WTC11 (cell line): ENCODE measurements at regions of chr1 and their contacts with region 1.

Region 1: DNA sequence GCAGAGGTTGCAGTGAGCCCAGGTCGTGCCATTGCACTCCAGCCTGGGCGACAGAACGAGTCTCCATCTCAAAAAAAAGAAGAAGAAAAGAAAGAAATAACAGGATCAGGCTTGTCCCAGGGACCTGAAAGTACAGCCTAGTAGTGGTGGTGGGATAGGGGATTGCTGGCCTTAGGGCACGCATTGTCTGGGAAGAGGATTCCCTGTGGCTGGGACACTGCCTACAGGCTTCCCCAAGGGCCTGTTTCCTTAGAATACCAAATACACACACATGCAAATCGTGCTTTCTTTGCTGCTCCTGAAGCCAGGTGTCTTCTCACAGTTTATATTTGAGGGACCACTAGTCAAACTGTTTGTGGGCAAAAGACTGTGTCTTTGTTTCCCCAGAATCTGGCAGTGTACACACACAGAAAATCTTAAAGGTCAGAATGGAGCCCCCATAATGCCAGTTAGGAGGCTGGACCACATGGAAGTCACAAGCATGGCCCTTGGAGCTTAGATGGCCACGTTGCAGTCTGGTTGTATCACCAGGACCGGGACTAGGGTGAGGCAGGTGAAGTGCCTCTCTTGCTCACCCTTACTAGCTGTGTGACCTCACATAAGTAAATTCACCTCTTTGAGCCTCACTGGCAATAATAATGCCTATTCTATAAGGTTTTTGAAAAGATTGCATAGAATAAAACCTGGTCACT is 12.7 kb upstream of the ASAP3 start:
- DNase-seq: no peak
- ATAC-seq: peak; percentile 51
- H3K4me3 Mint-ChIP-seq: no peak overlapping the region
- H3K27ac Mint-ChIP-seq: no peak overlapping the region
- H3K4me1 Mint-ChIP-seq: peaks cover 12% of the 10 kb centered on the region
- H3K27me3 Mint-ChIP-seq: peaks cover 4% of the 10 kb centered on the region
- CTCF ChIP-seq: no peak

Region 2: DNA sequence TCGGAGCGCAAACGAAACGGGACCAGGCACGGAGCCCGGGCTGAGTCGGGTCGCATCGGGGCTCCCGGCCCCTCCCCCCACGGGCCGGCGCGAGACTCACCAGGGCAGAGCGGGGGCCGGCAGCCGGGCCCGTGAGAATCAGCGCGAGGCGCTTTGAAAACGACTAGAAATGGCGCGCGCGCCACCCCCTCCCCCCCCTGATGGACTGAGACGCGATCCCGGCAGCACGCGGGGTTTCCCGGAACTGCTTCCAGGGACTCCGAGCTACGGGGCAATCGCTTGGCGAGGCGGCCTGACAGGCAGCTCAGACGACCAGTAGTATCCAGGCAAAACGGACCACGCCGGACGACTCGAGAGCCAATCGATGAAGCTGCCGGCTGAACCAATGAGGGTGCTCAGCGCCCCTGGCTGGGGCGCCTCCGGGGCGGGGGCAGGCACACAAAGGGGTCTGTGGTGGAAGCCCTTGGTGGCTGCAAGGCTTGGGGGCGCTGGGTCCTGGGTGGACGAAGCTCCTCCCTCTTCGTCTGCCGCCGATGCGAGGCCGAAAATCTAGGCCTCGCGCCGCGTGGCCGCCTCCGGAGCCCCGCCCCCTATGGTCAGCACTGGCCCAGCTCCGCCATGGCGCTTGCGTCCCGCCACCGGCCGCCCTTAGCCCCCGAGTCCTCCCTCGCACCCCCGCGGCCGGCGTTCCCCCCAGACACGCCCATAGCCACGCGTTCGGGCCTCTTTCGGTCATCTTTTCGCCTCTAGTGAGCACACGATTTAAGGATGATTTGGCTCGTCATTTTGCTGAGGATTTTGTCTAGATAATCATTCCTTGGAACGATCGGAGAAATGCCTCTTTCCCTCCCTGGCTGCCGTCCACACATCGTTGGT is 152.3 kb before region 1 on chr1 and contains the start of gene HNRNPR:
- CTCF ChIA-PET with region 1: interaction called, 11 read pairs
- POLR2A ChIA-PET with region 1: interaction called, 7 read pairs
- DNase-seq: peak; percentile 100
- ATAC-seq: peak; percentile 99
- H3K4me3 Mint-ChIP-seq: peak within 1 kb of the TSS; percentile 88
- H3K27ac Mint-ChIP-seq: peak within 1 kb of the TSS; percentile 99
- H3K4me1 Mint-ChIP-seq: peaks cover 43% of the 10 kb centered on the region
- H3K27me3 Mint-ChIP-seq: peaks cover 47% of the 10 kb centered on the region
- CTCF ChIP-seq: no peak
- total RNA-seq, gene HNRNPR: 157 to 178 TPM (median 170 TPM) in 3 replicates

Region 3: DNA sequence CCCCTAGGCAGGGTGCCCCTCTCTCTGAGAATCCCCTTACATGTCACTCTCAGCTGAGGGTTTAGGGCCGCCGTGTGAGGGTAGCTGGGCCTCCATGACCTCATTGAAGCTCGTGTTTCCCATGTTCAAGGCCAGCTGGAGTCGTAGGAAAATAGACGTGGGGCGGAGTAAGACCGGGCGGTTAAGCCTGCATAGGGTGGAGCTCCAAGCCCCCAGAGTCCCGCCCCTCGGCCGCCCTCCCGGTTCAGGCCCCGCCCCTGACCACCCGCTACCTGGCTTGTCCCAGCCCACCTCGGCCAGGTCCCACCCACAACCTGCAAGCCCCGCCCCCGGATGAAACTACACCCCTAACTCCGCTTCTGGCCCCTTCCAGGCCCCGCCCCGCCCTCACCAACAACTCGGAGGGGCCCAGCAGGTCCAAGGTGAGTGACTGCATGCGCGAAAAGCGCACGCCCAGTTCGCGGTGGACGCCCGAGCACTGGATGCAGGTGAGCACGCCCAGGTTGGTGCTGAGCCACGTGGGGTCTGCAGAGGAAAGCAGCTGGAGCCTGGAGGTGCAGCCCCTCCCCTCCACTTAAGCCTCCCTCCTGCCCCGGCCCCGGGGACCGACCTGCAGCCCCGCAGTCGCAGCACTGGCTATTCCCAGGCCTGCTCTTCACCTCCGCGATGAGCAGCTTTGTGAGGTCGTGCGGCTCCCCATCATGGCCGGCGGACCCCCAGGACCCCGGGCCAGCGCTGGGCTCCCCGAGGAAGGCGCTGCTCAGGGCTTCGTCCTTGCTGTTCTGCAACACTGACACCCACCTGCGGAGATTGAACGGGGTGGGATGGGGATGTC is 59.9 kb before region 1 on chr1:
- CTCF ChIA-PET with region 1: interaction called, 28 read pairs
- POLR2A ChIA-PET with region 1: no interaction called
- DNase-seq: peak; percentile 99
- ATAC-seq: peak; percentile 96
- H3K4me3 Mint-ChIP-seq: peak overlapping the region; percentile 45
- H3K27ac Mint-ChIP-seq: no peak overlapping the region
- H3K4me1 Mint-ChIP-seq: peaks cover 6% of the 10 kb centered on the region
- H3K27me3 Mint-ChIP-seq: no peaks in the 10 kb centered on the region
- CTCF ChIP-seq: no peak

Region 4: DNA sequence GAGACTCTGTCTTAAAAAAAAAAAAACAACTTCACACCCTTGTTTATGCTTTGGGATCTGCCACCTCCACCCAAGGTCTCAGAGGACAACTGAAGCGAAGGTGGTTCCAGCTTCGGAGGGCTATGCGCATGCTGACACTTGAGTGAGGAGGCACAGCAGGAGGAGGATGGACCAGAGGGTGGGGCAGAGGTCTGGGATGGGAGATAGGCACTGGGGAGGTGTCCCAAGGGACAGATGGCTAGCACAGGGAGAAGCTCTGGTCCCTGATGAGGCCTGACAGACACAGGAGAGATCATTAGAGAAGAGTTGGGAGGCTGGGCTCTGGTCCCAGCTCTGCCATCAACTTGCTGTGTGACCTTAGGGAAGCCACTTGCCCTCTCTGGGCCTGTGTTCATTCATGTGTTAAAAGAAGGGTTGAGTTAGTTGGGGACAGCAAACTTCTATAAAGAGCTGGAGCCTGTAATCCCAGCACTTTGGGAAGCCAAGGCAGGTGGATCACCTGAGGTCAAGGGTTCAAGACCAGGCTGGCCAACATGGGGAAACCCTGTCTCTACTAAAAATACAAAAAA is 17.6 kb after region 1 on chr1:
- CTCF ChIA-PET with region 1: interaction called, 58 read pairs
- POLR2A ChIA-PET with region 1: no interaction called
- DNase-seq: no peak
- ATAC-seq: no peak
- H3K4me3 Mint-ChIP-seq: no peak overlapping the region
- H3K27ac Mint-ChIP-seq: no peak overlapping the region
- H3K4me1 Mint-ChIP-seq: no peaks in the 10 kb centered on the region
- H3K27me3 Mint-ChIP-seq: no peaks in the 10 kb centered on the region
- CTCF ChIP-seq: no peak

Region 5: GRCh38 chr1:23559136-23559984 is 62.7 kb after region 1 on chr1 and contains the start of gene ID3:
- CTCF ChIA-PET with region 1: interaction called, 13 read pairs
- POLR2A ChIA-PET with region 1: no interaction called
- DNase-seq: peak; percentile 96
- ATAC-seq: peak; percentile 47
- H3K4me3 Mint-ChIP-seq: peak within 1 kb of the TSS; percentile 94
- H3K27ac Mint-ChIP-seq: peak within 1 kb of the TSS; percentile 98
- H3K4me1 Mint-ChIP-seq: peaks cover 74% of the 10 kb centered on the region
- H3K27me3 Mint-ChIP-seq: no peaks in the 10 kb centered on the region
- CTCF ChIP-seq: no peak
- total RNA-seq, gene ID3: 168 to 278 TPM (median 273 TPM) in 3 replicates

Region 6: DNA sequence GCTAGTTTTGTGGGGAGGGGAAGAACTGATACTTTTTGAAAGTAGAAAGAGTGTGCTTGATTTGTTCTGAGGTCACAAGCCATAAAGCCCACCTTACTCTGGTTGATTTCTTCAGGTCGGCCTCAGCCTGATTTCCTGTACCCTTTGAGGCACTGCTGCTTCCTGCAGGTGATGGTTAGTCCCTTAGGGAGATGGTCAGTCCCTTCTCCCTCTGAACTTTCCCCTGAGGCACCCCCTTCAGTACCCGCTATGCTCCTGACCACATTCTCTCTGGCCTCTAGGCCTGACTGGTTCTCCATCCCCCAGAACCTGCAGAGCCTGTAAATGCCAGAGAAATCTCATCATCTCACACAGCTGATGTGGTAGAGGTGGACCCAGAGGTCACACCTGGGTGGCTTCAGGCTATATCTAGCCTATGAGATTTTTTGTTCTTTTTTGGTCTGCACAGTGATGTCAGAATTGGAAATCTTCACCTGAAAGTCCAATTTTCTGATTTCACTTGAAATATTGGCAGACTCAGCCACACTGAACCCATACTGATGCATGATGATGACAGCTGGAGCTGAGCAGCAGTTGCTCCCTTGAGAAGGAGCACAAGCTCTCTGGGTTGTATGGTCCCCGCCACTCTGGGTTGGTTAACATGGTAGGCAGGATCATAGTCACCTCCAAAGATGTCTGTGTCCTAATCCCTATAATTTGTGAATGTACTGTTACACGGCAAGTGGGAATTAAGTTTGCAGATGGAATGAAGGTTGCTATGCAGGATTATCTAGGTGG is 77.8 kb after region 1 on chr1:
- CTCF ChIA-PET with region 1: no interaction called
- POLR2A ChIA-PET with region 1: no interaction called
- DNase-seq: no peak
- ATAC-seq: no peak
- H3K4me3 Mint-ChIP-seq: no peak overlapping the region
- H3K27ac Mint-ChIP-seq: no peak overlapping the region
- H3K4me1 Mint-ChIP-seq: peaks cover 39% of the 10 kb centered on the region
- H3K27me3 Mint-ChIP-seq: no peaks in the 10 kb centered on the region
- CTCF ChIP-seq: no peak

Region 7: DNA sequence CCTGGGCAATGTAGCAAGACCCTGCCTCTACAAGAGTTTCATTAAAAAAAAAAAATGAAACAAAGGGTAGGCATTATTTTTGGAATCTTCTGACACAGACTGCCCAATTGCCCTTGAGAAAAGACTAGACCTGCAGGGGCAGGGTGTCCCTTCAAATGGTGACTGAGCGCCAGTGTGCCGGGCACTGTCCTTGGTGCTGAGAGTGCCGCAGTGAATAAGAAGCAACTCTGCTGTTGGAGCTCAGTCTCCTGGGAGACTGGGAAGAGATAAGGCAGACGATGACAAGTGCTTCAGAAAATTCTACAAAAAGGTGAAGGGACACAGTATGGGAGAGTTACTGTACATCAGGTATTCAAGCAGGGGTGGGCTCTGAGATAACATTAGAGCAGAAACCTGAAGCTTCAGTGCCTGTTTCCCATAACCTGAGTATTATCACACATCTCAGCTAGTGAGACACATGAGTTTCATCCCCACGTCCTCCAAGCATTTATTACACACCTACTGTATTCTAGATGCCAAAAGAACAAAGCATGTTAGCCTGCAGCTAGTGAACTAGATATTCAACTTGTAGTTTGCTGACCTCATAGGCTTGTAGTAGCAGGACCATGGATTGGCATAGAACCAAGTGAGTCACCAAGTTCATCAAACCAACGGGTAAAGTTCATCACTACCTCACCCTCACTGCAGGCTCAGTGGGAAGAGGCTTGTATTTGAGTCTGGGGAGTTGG is 176.6 kb after region 1 on chr1:
- CTCF ChIA-PET with region 1: interaction called, 11 read pairs
- POLR2A ChIA-PET with region 1: no interaction called
- DNase-seq: peak; percentile 73
- ATAC-seq: peak; percentile 90
- H3K4me3 Mint-ChIP-seq: no peak overlapping the region
- H3K27ac Mint-ChIP-seq: no peak overlapping the region
- H3K4me1 Mint-ChIP-seq: no peaks in the 10 kb centered on the region
- H3K27me3 Mint-ChIP-seq: peaks cover 19% of the 10 kb centered on the region; the same call in 1 of the 2 replicates
- CTCF ChIP-seq: no peak